HepG2 (cell line): ENCODE measurements at regions of chr4 and their contacts with region 1.

Region 1: GRCh38 chr4:498328-498904 is 540 bp downstream of the ZNF721 start:
- DNase-seq: peak; percentile 8
- ATAC-seq: peak; percentile 41
- H3K4me3 ChIP-seq: peak overlapping the region; percentile 88 to 99 (median 94)
- H3K27ac ChIP-seq: peak overlapping the region; percentile 68
- H3K4me1 ChIP-seq: peaks cover 37% of the 10 kb centered on the region
- H3K27me3 ChIP-seq: no peaks in the 10 kb centered on the region; a peak in 1 of 5 replicates
- CTCF ChIP-seq: no peak
- EP300 ChIP-seq: no peak
- POLR2A ChIP-seq: no peak
- RAD21 ChIP-seq: no peak

Region 2: DNA sequence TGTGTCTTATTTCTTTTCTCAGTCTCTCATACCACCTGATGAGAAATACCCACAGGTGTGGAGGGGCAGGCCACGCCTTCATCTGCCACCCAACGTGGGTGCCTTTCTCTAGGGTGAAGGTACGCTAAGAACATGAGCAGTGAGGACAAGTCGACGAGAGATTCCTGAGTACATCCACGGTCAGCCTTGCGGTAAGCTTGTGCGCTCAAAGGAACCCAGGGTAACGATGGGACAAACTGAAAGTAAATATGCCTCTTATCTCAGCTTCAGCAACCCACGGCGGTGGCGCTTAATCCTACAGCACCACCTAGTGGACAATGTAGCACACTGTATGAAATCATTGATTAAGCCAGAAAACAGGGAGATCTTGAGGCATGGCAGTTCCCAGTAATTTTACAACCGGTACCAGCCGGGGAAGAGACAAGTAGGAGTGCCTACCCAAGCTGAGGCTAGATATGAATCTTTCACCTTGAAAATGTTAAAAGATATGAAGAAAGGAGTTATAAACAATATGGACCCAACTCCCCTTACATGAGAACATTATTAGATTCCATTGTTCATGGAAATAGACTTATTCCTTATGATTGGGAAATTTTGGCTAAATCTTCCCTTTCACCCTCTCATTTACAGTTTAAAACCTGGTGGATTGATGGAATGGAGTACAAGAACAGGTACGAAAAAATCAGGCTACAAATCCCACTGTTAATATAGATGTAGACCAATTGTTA is 256.1 kb before region 1 on chr4:
- CTCF ChIA-PET with region 1: no interaction called
- POLR2A ChIA-PET with region 1: no interaction called
- in situ Hi-C with region 1: no loop called
- intact Hi-C with region 1: no loop called
- DNase-seq: peak; percentile 18
- ATAC-seq: peak; percentile 58
- H3K4me3 ChIP-seq: no peak overlapping the region
- H3K27ac ChIP-seq: no peak overlapping the region
- H3K4me1 ChIP-seq: no peaks in the 10 kb centered on the region
- H3K27me3 ChIP-seq: no peaks in the 10 kb centered on the region
- CTCF ChIP-seq: peak; percentile 75
- EP300 ChIP-seq: no peak
- POLR2A ChIP-seq: no peak
- RAD21 ChIP-seq: no peak

Region 3: GRCh38 chr4:473570-474457 is 24.6 kb before region 1 on chr4:
- CTCF ChIA-PET with region 1: no interaction called
- POLR2A ChIA-PET with region 1: interaction called, 8 read pairs
- in situ Hi-C with region 1: no loop called
- intact Hi-C with region 1: loop called (anchors 1 kb)
- DNase-seq: peak; percentile 99
- ATAC-seq: peak; percentile 99
- H3K4me3 ChIP-seq: peak overlapping the region; percentile 83 to 95 (median 90)
- H3K27ac ChIP-seq: peak overlapping the region; percentile 94
- H3K4me1 ChIP-seq: peaks cover 11% of the 10 kb centered on the region
- H3K27me3 ChIP-seq: no peaks in the 10 kb centered on the region; a peak in 1 of 5 replicates
- CTCF ChIP-seq: no peak
- EP300 ChIP-seq: 0 out of 4 replicates have a peak, but pooled peaks of 1 of the 2 experiments have one; percentile 24
- POLR2A ChIP-seq: peak; percentile 94 to 98
- RAD21 ChIP-seq: peak; percentile 22; the same call in 1 of the 2 replicates

Region 4: GRCh38 chr4:602559-602942 is 104.1 kb after region 1 on chr4:
- CTCF ChIA-PET with region 1: no interaction called
- POLR2A ChIA-PET with region 1: no interaction called
- in situ Hi-C with region 1: no loop called
- intact Hi-C with region 1: loop called (anchors 10 kb)
- DNase-seq: peak; percentile 60
- ATAC-seq: peak; percentile 99
- H3K4me3 ChIP-seq: no peak overlapping the region
- H3K27ac ChIP-seq: no peak overlapping the region
- H3K4me1 ChIP-seq: no peaks in the 10 kb centered on the region
- H3K27me3 ChIP-seq: peaks cover 7 to 65% of the 10 kb centered on the region in 2 experiments; a peak in 4 of 5 replicates
- CTCF ChIP-seq: peak; percentile 97
- EP300 ChIP-seq: no peak
- POLR2A ChIP-seq: no peak
- RAD21 ChIP-seq: peak; percentile 91